ENCODE measurements at regions of chr21 and their contacts with region 1.

Region 1: GRCh38 chr21:33441489-33442477 is 38.0 kb downstream of the TMEM50B start:
- DNase-seq: peak; percentile 54 to 56
- ATAC-seq: peak; percentile 88

Region 2: DNA sequence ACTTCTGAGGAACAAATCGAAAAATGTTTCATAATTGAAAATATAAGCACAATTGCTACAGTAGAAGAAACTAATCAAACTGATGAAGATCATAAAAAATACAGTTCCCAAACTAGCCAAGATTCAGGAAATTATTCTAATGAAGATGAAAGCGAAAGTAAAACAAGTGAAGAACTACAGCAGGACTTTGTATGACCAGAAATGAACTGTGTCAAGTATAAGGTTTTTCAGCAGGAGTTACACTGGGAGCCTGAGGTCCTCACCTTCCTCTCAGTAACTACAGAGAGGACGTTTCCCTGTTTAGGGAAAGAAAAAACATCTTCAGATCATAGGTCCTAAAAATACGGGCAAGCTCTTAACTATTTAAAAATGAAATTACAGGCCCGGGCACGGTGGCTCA is 86.4 kb before region 1 on chr21:
- intact Hi-C with region 1: loop called in 1 of 2 experiments (anchors 10 kb)
- DNase-seq: no peak
- ATAC-seq: no peak

Region 3: DNA sequence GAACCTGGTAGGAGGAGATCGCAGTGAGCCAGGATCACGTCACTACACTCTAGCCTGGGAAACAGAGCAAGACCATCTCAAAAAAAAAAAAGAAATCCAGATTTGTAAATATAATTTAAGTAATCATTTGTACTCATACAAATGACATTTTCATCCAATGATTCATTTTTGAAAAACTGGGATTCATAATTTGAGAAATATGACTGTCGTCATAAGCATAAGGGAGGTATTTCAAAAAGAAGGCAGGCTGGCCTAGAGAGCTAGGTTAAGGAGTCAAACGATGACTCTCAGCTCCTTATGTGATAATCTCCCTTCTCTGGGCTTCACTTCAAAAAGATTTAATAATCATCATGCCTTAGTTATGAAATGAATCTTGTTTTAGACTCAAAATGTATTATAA is 97.8 kb after region 1 on chr21:
- intact Hi-C with region 1: no loop called
- DNase-seq: no peak
- ATAC-seq: no peak

Measured in left colon (tissue), 2 donors.